AG04449 (cell line): ENCODE measurements at regions of chr3 and their contacts with region 1.

Region 1: GRCh38 chr3:108489771-108490170 is 20.6 kb downstream of the MYH15 start:
- DNase-seq: no peak
- H3K4me3 ChIP-seq: no peak overlapping the region
- CTCF ChIP-seq: peak; percentile 50

Region 2: GRCh38 chr3:108159865-108160264 is 329.9 kb before region 1 on chr3:
- CTCF ChIA-PET with region 1: no interaction called
- POLR2A ChIA-PET with region 1: no interaction called
- DNase-seq: no peak
- H3K4me3 ChIP-seq: no peak overlapping the region
- CTCF ChIP-seq: no peak

Region 3: GRCh38 chr3:108359011-108359410 is 130.8 kb before region 1 on chr3:
- CTCF ChIA-PET with region 1: no interaction called
- POLR2A ChIA-PET with region 1: no interaction called
- DNase-seq: no peak
- H3K4me3 ChIP-seq: no peak overlapping the region
- CTCF ChIP-seq: no peak

Region 4: DNA sequence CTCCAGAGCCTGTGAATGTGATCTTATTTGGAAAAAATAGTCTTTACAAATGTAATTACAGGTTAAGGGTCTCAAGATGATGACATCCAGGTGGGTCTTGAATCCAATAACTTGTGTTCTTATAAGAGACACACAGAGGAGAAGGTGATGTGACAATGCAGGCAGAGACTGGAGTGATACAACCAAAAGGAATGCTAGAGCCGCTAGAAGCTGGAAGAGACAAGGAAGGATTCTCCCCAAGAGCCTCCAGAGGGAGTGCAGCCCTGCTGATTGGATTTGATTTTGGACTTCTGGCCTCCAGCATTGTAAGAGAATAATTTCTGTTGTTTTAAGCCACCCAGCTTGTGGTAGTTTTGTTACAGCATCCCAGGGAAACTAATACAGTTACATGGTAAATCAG is 11.0 kb after region 1 on chr3:
- CTCF ChIA-PET with region 1: interaction called, 26 read pairs
- POLR2A ChIA-PET with region 1: no interaction called
- DNase-seq: no peak
- H3K4me3 ChIP-seq: no peak overlapping the region
- CTCF ChIP-seq: no peak

Region 5: DNA sequence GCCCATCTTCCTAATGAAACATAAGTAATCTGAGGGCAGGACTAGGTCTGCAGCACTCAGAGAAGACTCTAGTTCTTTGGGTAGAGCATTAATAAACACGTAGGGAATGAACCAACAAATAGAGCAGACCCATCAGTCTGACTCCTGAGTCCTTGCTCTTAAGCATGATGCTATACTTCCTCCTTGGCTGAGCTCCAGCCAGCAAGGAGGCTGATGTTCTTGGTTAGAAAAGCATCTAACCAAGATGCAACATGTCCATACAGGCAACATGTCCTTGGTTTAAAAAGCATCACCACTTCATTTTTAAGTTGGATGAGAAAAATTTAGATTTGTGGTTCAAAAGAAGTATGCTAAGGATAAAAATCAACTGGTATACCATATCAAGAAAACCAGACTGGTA is 29.1 kb after region 1 on chr3:
- CTCF ChIA-PET with region 1: no interaction called
- POLR2A ChIA-PET with region 1: no interaction called
- DNase-seq: no peak
- H3K4me3 ChIP-seq: no peak overlapping the region
- CTCF ChIP-seq: no peak

Region 6: DNA sequence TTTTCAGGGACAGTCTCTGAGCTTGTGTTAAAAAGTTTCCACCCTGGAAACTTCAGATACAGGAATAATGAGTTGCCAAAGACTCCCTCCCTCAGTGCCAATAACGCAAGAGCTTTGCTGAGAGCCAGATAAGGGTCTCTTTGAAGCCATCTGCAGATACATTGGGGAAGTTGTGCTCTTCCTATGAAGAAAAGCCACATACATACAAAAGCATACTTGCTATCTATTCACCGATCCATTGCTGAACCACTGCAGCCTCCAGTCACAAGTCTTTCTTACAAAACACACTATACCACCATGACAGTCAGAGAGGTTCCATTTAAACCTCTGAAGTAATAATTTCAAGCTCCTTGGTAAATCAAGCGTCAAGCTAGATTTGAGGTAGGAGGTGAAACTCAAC is 277.5 kb after region 1 on chr3:
- CTCF ChIA-PET with region 1: no interaction called
- POLR2A ChIA-PET with region 1: no interaction called
- DNase-seq: no peak
- H3K4me3 ChIP-seq: no peak overlapping the region
- CTCF ChIP-seq: no peak